Activated CD4-positive, alpha-beta T cell treated with anti-CD3 and anti-CD28 coated beads for 36 hours (primary cell): ENCODE measurements at regions of chr12 and their contacts with region 1.

Region 1: GRCh38 chr12:52582971-52583456 is 9.4 kb upstream of the KRT74 start:
- DNase-seq: peak; percentile 80
- ATAC-seq: peak; percentile 78
- H3K4me3 Mint-ChIP-seq: no peak overlapping the region
- H3K27ac Mint-ChIP-seq: no peak overlapping the region
- H3K4me1 Mint-ChIP-seq: peaks cover 51% of the 10 kb centered on the region
- H3K27me3 Mint-ChIP-seq: no peaks in the 10 kb centered on the region

Region 2: GRCh38 chr12:52156736-52157565 is 426.1 kb before region 1 on chr12:
- CTCF ChIA-PET with region 1: no interaction called
- POLR2A ChIA-PET with region 1: no interaction called
- intact Hi-C with region 1: loop called (anchors 10 kb)
- DNase-seq: peak; percentile 85
- ATAC-seq: peak; percentile 65
- H3K4me3 Mint-ChIP-seq: no peak overlapping the region
- H3K27ac Mint-ChIP-seq: no peak overlapping the region
- H3K4me1 Mint-ChIP-seq: peaks cover 27% of the 10 kb centered on the region
- H3K27me3 Mint-ChIP-seq: no peaks in the 10 kb centered on the region

Region 3: GRCh38 chr12:52715416-52715815 is 132.4 kb after region 1 on chr12:
- CTCF ChIA-PET with region 1: interaction called, 5 read pairs
- POLR2A ChIA-PET with region 1: no interaction called
- intact Hi-C with region 1: loop called in 1 of 2 experiments (anchors 10 kb)
- DNase-seq: no peak
- ATAC-seq: no peak
- H3K4me3 Mint-ChIP-seq: no peak overlapping the region
- H3K27ac Mint-ChIP-seq: no peak overlapping the region
- H3K4me1 Mint-ChIP-seq: peaks cover 9% of the 10 kb centered on the region
- H3K27me3 Mint-ChIP-seq: peaks cover 18% of the 10 kb centered on the region

Region 4: GRCh38 chr12:52870351-52871290 is 287.6 kb after region 1 on chr12:
- CTCF ChIA-PET with region 1: interaction called, 32 read pairs
- POLR2A ChIA-PET with region 1: no interaction called
- intact Hi-C with region 1: loop called (anchors 1 kb)
- DNase-seq: peak; percentile 90
- ATAC-seq: peak; percentile 80
- H3K4me3 Mint-ChIP-seq: no peak overlapping the region
- H3K27ac Mint-ChIP-seq: no peak overlapping the region
- H3K4me1 Mint-ChIP-seq: peaks cover 22% of the 10 kb centered on the region
- H3K27me3 Mint-ChIP-seq: peaks cover 4% of the 10 kb centered on the region